Dendritic cell treated with granulocyte-macrophage colony-stimulating factor and Interleukin-4, amounts not matched to agents 40 ng/mL and 50 ng/mL, for 4 days (primary cell): ENCODE measurements at regions of chr10 and their contacts with region 1.

Region 1: GRCh38 chr10:12264204-12264940 is 68.4 kb downstream of the CDC123 start:
- H3K4me3 Mint-ChIP-seq: peak overlapping the region; percentile 61
- H3K27ac Mint-ChIP-seq: peak overlapping the region; percentile 92
- H3K4me1 Mint-ChIP-seq: peaks cover 50% of the 10 kb centered on the region
- H3K27me3 Mint-ChIP-seq: no peaks in the 10 kb centered on the region

Region 2: GRCh38 chr10:11959966-11960365 is 304.4 kb before region 1 on chr10:
- intact Hi-C with region 1: no loop called
- H3K4me3 Mint-ChIP-seq: no peak overlapping the region
- H3K27ac Mint-ChIP-seq: no peak overlapping the region
- H3K4me1 Mint-ChIP-seq: no peaks in the 10 kb centered on the region
- H3K27me3 Mint-ChIP-seq: no peaks in the 10 kb centered on the region

Region 3: DNA sequence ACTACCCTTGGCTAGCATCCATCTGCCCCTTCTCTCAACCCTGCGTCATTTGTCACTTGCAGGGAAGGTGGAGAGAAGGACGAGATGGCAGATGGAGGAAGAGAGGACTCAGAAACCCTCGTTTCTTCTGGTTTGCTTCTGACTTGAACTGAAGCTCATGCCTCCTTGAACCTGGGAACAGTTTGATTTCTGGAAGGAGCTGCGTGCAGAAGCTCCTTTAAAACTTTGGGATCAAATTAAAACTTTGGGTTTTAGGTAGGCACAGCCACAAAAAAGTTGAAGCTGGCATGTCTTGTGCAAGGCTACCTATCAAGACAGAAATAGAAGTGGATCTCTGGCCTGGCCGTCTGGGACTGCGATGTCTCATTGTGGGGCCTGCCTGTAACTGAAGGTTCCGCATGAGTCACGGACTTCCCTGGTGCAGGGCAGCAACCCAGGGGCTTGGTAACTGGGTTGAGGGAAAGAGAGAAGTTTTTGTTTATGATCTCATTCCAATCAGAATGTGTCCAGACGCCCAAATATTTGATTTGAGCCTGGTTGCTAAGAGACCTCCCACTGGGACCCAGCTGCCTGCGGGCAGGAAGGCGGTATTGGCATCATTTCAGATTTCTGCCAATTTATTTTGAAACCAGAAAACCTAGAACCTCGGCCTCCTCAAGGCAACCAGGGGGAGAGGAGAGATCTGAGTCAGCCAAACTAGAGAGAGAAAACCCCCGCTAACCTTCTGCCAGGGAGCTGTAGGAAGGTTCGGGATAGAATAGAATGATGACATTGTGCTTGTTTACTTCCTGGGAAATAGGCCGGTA is 69.2 kb after region 1 on chr10:
- intact Hi-C with region 1: loop called (anchors 5 kb)
- H3K4me3 Mint-ChIP-seq: peak overlapping the region; percentile 4
- H3K27ac Mint-ChIP-seq: peak overlapping the region; percentile 89
- H3K4me1 Mint-ChIP-seq: peaks cover 25% of the 10 kb centered on the region
- H3K27me3 Mint-ChIP-seq: no peaks in the 10 kb centered on the region

Region 4: DNA sequence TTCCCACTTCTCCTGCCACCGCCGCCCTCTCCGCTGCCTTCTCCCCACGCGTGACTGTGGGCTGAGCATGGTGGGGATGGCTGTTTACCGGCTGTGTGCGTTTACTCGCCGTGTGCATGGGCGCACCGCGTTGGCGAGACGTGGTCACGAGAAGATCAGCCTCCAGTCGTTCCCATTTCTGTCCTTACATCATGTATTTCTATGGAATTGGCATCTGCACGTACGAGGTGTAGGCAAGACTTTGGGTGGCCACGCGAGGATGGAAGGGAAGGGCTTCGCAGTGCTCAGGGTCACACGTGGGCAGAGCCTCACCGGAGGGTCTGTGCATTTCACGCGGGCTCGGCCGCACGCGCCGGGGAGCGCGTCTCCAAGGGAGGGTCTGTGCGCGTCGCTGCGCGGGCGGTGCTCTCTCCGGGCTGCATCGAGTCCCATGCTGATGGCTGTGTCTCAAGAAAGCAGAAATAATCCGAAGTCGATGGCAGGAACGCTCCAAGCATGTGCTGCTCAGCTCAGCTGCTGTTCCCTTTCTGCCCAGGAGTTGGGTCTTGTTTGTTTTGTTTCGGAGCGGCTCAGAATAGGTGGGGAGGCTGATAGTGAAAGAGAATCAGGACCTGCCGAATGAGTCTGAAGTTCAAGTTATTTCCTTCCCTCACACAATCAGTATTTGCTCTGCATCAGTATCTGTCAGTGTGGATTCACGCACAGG is 85.9 kb after region 1 on chr10:
- intact Hi-C with region 1: loop called (anchors 2 kb)
- H3K4me3 Mint-ChIP-seq: peak overlapping the region; percentile 98
- H3K27ac Mint-ChIP-seq: peak overlapping the region; percentile 97
- H3K4me1 Mint-ChIP-seq: peaks cover 61% of the 10 kb centered on the region
- H3K27me3 Mint-ChIP-seq: peaks cover 26% of the 10 kb centered on the region

Region 5: DNA sequence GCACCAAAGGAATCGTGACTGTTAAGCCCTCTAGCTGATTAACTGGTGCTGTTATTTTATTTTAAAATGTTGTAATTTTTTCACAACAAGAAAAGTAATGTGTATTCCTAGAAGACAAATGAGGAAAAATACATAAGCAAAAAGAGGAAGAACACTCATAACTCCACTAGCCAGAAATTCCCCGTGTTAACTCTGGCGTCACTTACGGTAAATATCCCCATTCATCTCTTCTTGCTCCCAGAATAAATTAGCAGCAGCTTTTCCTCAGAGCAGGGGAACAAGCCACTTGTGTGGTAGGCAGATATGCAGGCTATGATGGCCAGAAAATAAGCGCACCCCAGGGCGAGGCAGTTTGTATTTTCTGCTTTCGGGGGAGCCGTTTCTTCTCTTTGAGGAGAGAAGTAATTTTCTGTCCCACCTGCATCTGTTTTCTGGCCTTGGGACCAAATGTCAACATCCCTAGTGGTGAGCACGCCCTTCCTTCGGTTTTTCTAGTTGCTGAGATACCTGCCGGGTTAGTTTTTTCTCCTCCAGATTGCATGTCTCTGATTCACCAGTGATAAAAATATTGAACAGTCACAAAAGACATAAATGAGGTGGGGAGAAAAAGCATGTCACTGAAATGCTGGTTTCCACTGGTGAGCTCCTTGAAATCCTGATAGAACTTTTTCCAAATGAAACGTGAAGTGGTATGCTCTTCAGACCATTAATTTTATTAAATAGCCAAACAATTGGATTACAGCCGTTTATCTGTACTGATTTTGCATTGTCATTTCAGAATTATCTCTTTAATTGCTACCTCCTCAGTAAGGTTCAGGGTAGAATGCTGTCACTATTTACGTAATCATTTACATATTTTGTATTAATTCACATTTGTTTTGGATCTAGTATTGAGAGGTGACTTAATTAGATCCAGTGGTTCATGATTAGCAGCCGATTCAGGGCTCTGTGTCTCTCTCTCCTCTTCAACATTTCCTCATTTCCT is 353.1 kb after region 1 on chr10:
- intact Hi-C with region 1: loop called (anchors 10 kb)
- H3K4me3 Mint-ChIP-seq: no peak overlapping the region
- H3K27ac Mint-ChIP-seq: peak overlapping the region; percentile 81
- H3K4me1 Mint-ChIP-seq: peaks cover 30% of the 10 kb centered on the region
- H3K27me3 Mint-ChIP-seq: peaks cover 3% of the 10 kb centered on the region

Region 6: GRCh38 chr10:12656518-12657142 is 392.3 kb after region 1 on chr10:
- intact Hi-C with region 1: loop called (anchors 5 kb)
- H3K4me3 Mint-ChIP-seq: no peak overlapping the region
- H3K27ac Mint-ChIP-seq: no peak overlapping the region
- H3K4me1 Mint-ChIP-seq: peaks cover 22% of the 10 kb centered on the region
- H3K27me3 Mint-ChIP-seq: no peaks in the 10 kb centered on the region